ENCODE measurements at regions of chr6 and their contacts with region 1.

Region 1: GRCh38 chr6:137699031-137699683 is 167.9 kb upstream of the TNFAIP3 start:
- DNase-seq: no peak
- ATAC-seq: peak; percentile 81
- H3K4me3 ChIP-seq: no peak overlapping the region
- H3K4me3 Mint-ChIP-seq: peak overlapping the region in 9 of 10 donors; percentile 3 to 84 (median 40)
- H3K27ac ChIP-seq: no peak overlapping the region
- H3K27ac Mint-ChIP-seq: peak overlapping the region; percentile 22 to 98 (median 49)
- H3K4me1 ChIP-seq: peaks cover 11 to 14% of the 10 kb centered on the region in 2 donors
- H3K4me1 Mint-ChIP-seq: peaks cover 11 to 56% (median 15%) of the 10 kb centered on the region in 7 donors
- H3K27me3 ChIP-seq: no peaks in the 10 kb centered on the region
- H3K27me3 Mint-ChIP-seq: peaks cover 0 to 22% (median 5%) of the 10 kb centered on the region in 5 donors

Region 2: DNA sequence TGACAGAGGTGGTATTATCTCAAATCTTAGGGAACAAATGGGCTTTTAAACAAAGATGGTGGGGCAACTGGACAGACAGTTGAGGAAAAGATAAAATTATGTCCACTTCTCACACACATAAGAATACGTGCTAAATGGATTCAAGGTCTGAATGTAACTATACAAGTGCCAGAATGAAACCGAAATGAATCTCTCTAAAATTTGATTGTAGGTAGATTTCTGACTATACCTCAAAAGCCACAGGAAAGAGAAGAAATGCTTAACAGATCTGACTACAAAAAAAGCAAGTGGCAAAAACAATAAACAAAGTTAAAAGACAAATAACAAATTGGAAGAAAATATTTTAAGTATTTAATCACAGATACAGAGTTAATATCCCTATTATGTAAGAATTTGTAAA is 22.3 kb before region 1 on chr6:
- CTCF ChIA-PET with region 1: no interaction called
- POLR2A ChIA-PET with region 1: no interaction called
- intact Hi-C with region 1: loop called in 1 of 2 experiments (anchors 1 kb)
- DNase-seq: no peak
- ATAC-seq: no peak
- H3K4me3 ChIP-seq: no peak overlapping the region
- H3K4me3 Mint-ChIP-seq: peak overlapping the region in 1 of 10 donors; percentile 67
- H3K27ac ChIP-seq: no peak overlapping the region
- H3K27ac Mint-ChIP-seq: peak overlapping the region in 1 of 9 donors; percentile 88
- H3K4me1 ChIP-seq: peaks cover 0 to 8% of the 10 kb centered on the region in 2 donors
- H3K4me1 Mint-ChIP-seq: peaks cover 0 to 52% (median 4%) of the 10 kb centered on the region in 7 donors
- H3K27me3 ChIP-seq: no peaks in the 10 kb centered on the region
- H3K27me3 Mint-ChIP-seq: peaks cover 5 to 36% (median 14%) of the 10 kb centered on the region in 5 donors